HepG2 (cell line): ENCODE measurements at regions of chr1 and their contacts with region 1.

Region 1: DNA sequence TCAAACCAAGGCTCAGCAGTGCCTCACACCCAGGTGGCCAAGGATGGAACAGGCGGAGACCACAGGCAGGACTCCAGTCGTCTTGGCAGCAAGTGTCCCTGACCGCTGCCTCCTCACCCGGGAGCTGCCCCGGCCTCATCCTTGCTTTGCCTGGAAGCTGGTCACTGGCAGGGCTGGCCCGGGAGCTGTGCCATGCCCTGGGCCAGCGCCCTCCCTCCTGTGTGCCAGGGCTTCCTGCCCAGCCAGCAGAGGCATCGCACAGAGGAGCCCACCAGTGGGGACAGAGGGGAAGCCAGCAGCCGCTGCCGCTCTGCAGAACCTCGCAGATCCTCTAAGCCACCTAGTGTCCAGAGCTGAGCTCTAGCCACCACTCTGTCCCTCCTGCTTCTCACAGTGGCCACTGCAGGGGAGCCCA is 7.8 kb downstream of the CASZ1 start:
- DNase-seq: peak; percentile 33
- ATAC-seq: peak; percentile 98
- H3K4me3 ChIP-seq: no peak overlapping the region
- H3K27ac ChIP-seq: no peak overlapping the region
- H3K4me1 ChIP-seq: peaks cover 6% of the 10 kb centered on the region
- H3K27me3 ChIP-seq: peaks cover 6 to 55% of the 10 kb centered on the region in 2 experiments; a peak in 4 of 5 replicates
- CTCF ChIP-seq: peak; percentile 68
- EP300 ChIP-seq: no peak
- POLR2A ChIP-seq: no peak
- RAD21 ChIP-seq: peak; percentile 71

Region 2: GRCh38 chr1:10514490-10515235 is 273.9 kb before region 1 on chr1:
- CTCF ChIA-PET with region 1: no interaction called
- POLR2A ChIA-PET with region 1: no interaction called
- in situ Hi-C with region 1: loop called (anchors 5 kb)
- intact Hi-C with region 1: loop called (anchors 1 kb)
- DNase-seq: peak; percentile 47
- ATAC-seq: peak; percentile 46
- H3K4me3 ChIP-seq: no peak overlapping the region
- H3K27ac ChIP-seq: no peak overlapping the region
- H3K4me1 ChIP-seq: peaks cover 78% of the 10 kb centered on the region
- H3K27me3 ChIP-seq: no peaks in the 10 kb centered on the region
- CTCF ChIP-seq: peak; percentile 83
- EP300 ChIP-seq: no peak
- POLR2A ChIP-seq: no peak
- RAD21 ChIP-seq: peak; percentile 38; the same call in 1 of the 2 replicates